Activated CD8-positive, alpha-beta memory T cell treated with anti-CD3 and anti-CD28 coated beads, Interleukin-2, amount 10 ng/mL, durations not matched to agents 7 days and 5 days (primary cell): ENCODE measurements at regions of chr1 and their contacts with region 1.

Region 1: GRCh38 chr1:9629445-9630201 is 21.9 kb upstream of the PIK3CD start:
- DNase-seq: peak; percentile 90
- ATAC-seq: peak; percentile 43
- H3K4me3 Mint-ChIP-seq: peak overlapping the region; percentile 100
- H3K27ac Mint-ChIP-seq: peak overlapping the region; percentile 93
- H3K4me1 Mint-ChIP-seq: peaks cover 66% of the 10 kb centered on the region
- H3K27me3 Mint-ChIP-seq: no peaks in the 10 kb centered on the region

Region 2: GRCh38 chr1:9529190-9529589 is 100.4 kb before region 1 on chr1:
- CTCF ChIA-PET with region 1: no interaction called
- DNase-seq: no peak
- ATAC-seq: no peak
- H3K4me3 Mint-ChIP-seq: no peak overlapping the region
- H3K27ac Mint-ChIP-seq: no peak overlapping the region
- H3K4me1 Mint-ChIP-seq: no peaks in the 10 kb centered on the region
- H3K27me3 Mint-ChIP-seq: no peaks in the 10 kb centered on the region

Region 3: GRCh38 chr1:9539165-9539828 is 90.3 kb before region 1 on chr1 and contains the start of gene SLC25A33:
- CTCF ChIA-PET with region 1: no interaction called
- DNase-seq: peak; percentile 98
- ATAC-seq: peak; percentile 98
- H3K4me3 Mint-ChIP-seq: peak within 1 kb of the TSS; percentile 86
- H3K27ac Mint-ChIP-seq: peak within 1 kb of the TSS; percentile 76
- H3K4me1 Mint-ChIP-seq: peaks cover 34% of the 10 kb centered on the region
- H3K27me3 Mint-ChIP-seq: no peaks in the 10 kb centered on the region
- total RNA-seq, gene SLC25A33: 4.5 to 7.7 TPM

Region 4: GRCh38 chr1:9596415-9597123 is 33.1 kb before region 1 on chr1:
- CTCF ChIA-PET with region 1: no interaction called
- DNase-seq: no peak
- ATAC-seq: no peak
- H3K4me3 Mint-ChIP-seq: no peak overlapping the region
- H3K27ac Mint-ChIP-seq: no peak overlapping the region
- H3K4me1 Mint-ChIP-seq: peaks cover 17% of the 10 kb centered on the region
- H3K27me3 Mint-ChIP-seq: no peaks in the 10 kb centered on the region

Region 5: DNA sequence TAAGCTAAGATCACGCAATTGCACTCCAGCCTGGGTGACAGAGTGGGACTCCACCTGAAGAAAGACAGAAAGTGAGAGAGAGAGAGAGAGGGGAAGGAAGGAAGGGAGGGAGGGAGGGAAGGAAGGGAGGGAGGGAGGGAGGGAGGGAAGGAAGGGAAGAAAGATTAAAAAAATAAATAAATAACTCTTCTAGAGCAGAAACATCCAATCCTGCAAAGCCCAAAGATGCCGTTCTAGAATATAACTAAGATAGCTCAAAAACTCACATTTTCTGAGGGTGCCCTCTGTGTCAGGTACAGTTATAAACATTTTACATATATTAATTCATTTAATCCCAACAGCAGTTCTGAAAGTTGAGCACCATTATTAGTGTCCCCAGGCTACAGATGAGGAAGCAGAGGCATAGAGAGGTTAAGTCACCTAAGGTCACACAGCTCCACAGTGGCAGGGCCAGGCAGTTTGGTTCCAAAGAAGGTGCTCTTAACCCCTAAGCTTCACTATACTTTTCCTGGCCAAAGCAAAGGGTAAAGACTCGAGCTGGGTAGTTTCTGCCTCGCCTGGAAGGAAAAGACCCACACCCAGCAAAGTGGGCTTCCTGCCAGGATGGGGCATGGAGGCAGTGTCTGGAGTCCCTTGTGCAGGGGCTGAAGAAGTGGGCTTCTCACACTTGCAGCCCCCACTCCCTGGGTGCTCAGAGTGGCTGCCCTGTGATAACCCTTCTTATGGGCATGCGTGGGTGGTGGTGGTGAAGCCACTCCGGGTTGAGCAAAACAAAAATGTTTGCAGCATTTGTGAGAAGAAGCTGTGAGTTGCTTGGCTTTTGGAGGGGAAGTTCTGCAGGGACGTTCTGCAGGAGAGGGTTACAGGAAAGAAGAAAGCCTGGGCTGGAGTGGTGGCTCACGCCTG is 14.0 kb after region 1 on chr1:
- CTCF ChIA-PET with region 1: interaction called, 40 read pairs
- DNase-seq: no peak
- ATAC-seq: peak; percentile 22
- H3K4me3 Mint-ChIP-seq: no peak overlapping the region
- H3K27ac Mint-ChIP-seq: peak overlapping the region; percentile 74
- H3K4me1 Mint-ChIP-seq: peaks cover 60% of the 10 kb centered on the region
- H3K27me3 Mint-ChIP-seq: no peaks in the 10 kb centered on the region

Region 6: DNA sequence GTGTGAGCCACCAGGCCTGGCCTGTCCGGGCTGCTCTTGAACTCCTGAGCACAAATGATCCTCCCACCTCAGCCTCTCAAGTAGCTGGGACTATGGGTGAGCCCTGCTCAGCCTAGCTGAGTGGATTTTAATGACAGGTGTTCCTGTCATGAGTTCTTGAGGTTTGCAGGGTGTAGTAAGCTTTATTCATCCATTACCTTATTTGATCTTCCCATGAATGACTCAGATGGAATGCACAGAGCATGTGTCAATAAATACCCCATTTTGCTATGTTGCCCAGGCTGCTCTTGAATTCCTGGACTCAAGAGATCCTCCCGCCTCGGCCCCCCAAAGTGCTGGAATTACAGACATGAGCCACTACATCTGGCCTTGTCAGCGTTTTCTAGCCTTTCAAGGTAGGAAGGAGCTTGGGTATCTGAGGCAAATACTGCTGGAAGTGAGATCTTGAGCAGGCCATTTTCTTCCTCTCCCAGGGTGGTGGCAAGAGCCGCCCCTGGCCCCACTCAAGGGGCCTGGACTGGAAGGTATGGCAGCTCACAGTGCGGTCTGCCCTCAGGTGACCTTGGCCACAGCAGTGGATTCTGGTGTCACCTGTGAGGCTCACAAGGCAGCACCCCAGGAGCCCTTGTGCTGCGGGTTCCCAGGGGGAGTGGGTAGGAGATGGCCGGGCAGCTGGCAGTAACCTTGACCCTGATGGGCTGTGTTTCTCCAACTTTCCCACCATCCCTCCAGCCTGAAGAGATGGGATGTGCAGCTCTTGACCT is 41.9 kb after region 1 on chr1:
- CTCF ChIA-PET with region 1: interaction called, 21 read pairs
- DNase-seq: no peak
- ATAC-seq: no peak
- H3K4me3 Mint-ChIP-seq: no peak overlapping the region
- H3K27ac Mint-ChIP-seq: peak overlapping the region; percentile 49
- H3K4me1 Mint-ChIP-seq: peaks cover 57% of the 10 kb centered on the region
- H3K27me3 Mint-ChIP-seq: no peaks in the 10 kb centered on the region

Region 7: DNA sequence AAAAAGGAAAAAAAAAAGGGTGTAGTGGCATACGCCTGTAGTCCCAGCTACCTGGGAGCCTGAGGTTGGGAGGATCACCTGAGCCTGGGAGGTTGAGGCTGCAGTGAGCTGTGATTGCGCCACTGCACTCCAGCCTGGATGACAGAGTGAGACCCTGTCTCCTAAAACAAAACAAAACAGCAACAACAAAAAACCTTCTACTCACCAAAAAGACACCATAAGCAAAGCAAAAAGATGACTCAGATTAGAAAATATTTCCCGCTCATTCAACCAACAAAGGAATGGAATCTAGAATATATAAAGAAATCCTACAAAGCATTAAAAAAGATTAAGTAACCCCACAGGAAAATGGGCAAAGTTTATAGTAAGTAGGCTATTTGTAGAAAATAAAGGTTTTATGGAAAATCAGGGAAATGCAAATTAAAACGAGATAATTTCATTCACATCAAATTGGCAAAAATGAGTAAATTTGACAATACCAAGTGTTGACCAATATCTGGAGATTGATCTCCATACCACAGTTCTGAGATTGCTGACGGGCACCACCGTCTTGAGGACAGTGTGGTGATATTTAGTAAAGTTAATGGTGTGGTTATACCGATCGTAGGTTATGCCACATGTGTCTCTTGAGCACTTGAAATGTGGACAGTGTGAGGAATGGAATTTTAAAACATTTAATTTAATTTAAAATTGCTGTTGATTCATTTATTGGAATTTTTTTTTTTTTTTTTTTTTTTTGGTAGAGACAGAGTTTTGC is 75.9 kb after region 1 on chr1:
- CTCF ChIA-PET with region 1: interaction called, 20 read pairs
- DNase-seq: no peak
- ATAC-seq: no peak
- H3K4me3 Mint-ChIP-seq: no peak overlapping the region
- H3K27ac Mint-ChIP-seq: peak overlapping the region; percentile 80
- H3K4me1 Mint-ChIP-seq: peaks cover 68% of the 10 kb centered on the region
- H3K27me3 Mint-ChIP-seq: no peaks in the 10 kb centered on the region

Region 8: DNA sequence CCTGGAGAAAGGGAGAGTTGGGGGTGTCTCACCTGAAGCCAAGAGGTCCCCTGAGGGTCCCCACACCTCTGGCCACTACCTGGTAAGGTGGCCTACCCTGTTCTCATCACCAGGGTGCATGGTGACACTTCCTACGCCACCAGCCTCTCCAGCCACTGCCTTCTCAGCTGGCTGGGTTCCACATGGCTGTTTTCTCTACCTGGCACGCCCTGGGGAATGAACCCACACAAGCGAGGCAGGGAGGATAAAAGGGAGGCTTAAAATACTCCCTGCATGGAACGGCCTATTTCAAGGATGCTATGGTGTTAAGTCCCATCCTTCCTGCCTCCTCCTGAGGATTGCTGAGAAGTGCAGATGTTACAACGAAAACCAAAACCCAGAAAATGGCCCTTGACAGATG is 106.6 kb after region 1 on chr1:
- CTCF ChIA-PET with region 1: interaction called, 12 read pairs
- DNase-seq: no peak
- ATAC-seq: no peak
- H3K4me3 Mint-ChIP-seq: no peak overlapping the region
- H3K27ac Mint-ChIP-seq: no peak overlapping the region
- H3K4me1 Mint-ChIP-seq: peaks cover 40% of the 10 kb centered on the region
- H3K27me3 Mint-ChIP-seq: no peaks in the 10 kb centered on the region

Region 9: DNA sequence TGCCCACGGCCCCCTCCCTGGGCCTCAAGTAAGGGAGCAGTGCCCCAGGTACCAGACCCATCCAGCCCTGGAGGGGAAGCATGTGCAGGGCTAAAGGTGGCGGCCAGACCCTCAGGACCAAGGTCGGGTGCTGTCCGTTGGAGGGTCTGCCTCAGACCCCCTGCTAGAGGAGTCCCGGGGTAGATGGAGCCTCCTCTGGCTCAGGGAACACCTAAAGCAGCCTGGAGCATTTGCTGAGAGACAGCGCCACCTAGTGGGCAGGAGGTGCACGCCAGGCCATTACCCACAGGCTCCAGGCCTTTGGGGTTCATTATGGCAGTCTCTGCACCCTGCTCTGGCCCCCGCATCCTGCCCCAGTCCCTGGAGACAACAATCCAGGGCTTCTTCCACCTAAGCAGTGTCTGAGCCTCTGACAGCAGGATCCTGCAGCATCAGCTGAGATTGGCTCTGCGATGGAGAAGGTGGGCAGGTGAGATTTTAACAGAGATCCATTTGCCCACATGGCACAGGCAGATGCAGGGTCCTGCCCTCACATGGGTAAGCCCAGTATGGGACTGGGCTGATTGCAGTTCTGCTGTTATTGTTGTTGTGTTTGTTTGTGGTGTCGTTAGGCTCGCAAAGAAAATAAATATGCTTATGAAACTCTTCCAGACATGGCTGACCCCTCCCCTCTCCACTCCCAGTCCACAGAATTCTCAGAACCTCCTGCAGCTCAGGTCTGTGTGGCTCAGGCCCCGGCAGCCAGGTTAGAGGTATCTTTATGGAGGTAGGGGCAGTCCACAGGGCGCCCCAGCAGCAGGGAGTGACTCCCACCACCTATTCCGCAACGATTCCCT is 238.0 kb after region 1 on chr1:
- CTCF ChIA-PET with region 1: interaction called, 25 read pairs
- DNase-seq: peak; percentile 92
- ATAC-seq: peak; percentile 98
- H3K4me3 Mint-ChIP-seq: no peak overlapping the region
- H3K27ac Mint-ChIP-seq: peak overlapping the region; percentile 7
- H3K4me1 Mint-ChIP-seq: peaks cover 2% of the 10 kb centered on the region
- H3K27me3 Mint-ChIP-seq: no peaks in the 10 kb centered on the region